OCI-LY7 (cell line): ENCODE measurements at regions of chr7 and their contacts with region 1.

Region 1: GRCh38 chr7:7968543-7969305 is at the start of gene GLCCI1:
- DNase-seq: peak; percentile 98
- H3K4me3 ChIP-seq: peak within 1 kb of the TSS; percentile 72
- H3K27ac ChIP-seq: peak within 1 kb of the TSS; percentile 92
- H3K4me1 ChIP-seq: peaks cover 50% of the 10 kb centered on the region
- CTCF ChIP-seq: no peak
- total RNA-seq, gene GLCCI1: 18.5 and 21.3 TPM in 2 replicates

Region 2: DNA sequence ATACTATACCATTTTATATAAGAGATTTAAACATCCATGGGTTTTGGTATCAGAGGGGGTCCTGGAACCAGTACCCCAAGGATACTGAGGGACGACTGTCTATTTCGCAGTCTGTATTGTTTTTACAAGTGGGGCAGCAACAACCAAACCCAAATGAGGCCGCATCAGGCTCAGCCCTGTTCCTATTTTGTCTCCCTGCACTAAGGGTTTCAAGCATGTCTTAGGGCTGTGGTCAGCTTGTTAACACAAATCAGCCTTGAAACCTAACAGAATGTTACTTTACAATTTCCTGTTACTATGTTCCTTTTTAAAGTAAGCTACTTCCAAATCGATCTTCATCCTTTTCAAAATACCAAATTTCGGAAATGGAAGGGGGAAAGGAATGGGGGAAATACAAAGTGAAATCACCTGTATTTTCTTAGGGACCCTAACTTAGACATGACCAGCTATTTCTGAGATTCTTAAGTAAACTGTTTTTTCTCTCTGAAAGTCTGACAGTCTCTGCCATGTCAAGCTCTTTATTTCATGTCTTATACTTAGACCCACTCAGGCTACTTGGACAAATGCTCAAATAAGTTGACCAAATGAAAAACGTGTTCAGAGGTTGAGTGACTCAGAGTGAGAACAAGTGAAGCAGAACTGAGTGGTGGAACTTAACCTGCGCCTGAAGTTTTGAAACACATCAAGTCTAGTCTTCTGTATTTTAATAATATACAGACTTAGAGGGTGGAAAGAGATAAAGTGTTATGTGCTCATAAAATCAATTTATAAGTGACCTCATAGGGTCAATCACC is 710.6 kb before region 1 on chr7:
- CTCF ChIA-PET with region 1: no interaction called
- POLR2A ChIA-PET with region 1: no interaction called
- intact Hi-C with region 1: loop called (anchors 5 kb)
- DNase-seq: peak; percentile 60
- H3K4me3 ChIP-seq: peak overlapping the region; percentile 65
- H3K27ac ChIP-seq: peak overlapping the region; percentile 86
- H3K4me1 ChIP-seq: peaks cover 44% of the 10 kb centered on the region
- CTCF ChIP-seq: no peak

Region 3: DNA sequence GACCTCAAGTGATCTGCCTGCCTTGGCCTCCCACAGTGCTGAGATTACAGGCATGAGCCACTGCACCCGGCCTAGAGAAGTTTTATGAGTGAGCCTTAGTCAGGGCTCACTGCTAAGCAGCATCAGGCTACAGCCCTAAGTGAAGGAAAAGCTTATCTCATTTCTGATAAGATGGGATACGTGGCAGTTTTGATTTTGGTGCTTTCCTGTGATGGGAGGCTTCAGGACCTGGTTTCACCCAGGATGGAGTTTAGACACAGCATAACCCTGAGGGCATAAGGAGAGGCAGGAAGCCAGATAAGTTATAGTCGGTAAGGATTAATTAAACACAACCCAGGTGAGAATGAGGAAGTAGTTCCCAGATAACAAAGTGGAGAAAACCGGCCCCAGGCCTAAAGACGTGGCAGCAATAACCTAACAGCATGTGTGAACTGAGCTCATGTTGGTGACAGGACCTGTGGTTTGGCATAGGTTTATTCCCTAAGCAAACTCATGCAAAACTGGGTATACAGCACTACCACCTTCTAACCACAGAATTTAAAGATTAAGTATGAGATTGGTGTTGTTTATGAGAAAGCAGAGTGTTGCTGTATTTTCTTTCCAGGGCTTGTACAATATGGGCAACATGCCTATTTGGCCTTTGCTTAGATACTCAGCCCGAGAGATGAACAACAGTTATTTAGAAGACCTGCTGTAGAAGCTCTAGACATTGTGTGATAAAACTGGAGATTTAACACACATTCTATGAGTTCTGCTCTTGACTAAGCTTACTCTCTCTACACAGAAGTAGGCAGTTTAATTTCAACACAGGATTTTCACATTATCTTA is 552.5 kb before region 1 on chr7:
- CTCF ChIA-PET with region 1: no interaction called
- POLR2A ChIA-PET with region 1: no interaction called
- intact Hi-C with region 1: no loop called
- DNase-seq: no peak
- H3K4me3 ChIP-seq: no peak overlapping the region
- H3K27ac ChIP-seq: no peak overlapping the region
- H3K4me1 ChIP-seq: no peaks in the 10 kb centered on the region
- CTCF ChIP-seq: no peak

Region 4: DNA sequence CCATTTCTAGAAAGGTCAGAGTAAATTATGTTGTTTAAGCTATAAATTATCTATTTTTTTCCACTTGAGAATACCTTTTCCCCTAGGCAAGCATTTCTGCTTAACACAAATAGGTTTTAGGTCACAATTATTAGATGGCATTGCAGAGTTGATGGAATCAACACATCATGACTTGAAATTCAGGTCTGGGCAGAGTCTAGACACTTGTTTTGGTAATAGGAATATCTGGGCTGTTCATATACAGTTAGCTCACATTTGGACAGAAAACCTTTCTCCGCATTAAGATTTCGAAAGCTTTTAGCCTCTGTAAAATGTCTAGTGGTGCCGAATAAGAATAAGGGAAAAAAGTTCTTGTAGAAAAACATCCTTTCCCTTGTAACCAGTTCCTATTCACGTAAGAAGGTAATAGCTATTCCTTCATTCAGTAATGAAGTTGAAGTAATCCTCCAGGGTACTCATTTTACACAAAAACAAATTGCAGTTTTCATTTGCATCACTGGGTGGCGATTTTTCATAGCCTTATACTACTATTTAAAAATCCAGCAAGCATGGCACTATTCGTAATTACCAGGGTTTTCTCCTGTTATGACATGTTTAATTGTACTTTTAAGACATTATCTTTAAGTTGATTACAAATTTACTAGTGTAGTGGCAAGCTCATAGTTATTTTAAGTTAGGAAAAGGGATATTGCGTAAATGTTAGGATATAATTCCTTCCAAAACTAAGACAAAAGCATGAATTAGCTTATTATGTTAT is 287.4 kb before region 1 on chr7:
- CTCF ChIA-PET with region 1: interaction called, 4 read pairs
- POLR2A ChIA-PET with region 1: interaction called, 5 read pairs
- intact Hi-C with region 1: loop called (anchors 1 kb)
- DNase-seq: peak; percentile 75
- H3K4me3 ChIP-seq: no peak overlapping the region
- H3K27ac ChIP-seq: peak overlapping the region; percentile 12
- H3K4me1 ChIP-seq: peaks cover 6% of the 10 kb centered on the region
- CTCF ChIP-seq: peak; percentile 91

Region 5: DNA sequence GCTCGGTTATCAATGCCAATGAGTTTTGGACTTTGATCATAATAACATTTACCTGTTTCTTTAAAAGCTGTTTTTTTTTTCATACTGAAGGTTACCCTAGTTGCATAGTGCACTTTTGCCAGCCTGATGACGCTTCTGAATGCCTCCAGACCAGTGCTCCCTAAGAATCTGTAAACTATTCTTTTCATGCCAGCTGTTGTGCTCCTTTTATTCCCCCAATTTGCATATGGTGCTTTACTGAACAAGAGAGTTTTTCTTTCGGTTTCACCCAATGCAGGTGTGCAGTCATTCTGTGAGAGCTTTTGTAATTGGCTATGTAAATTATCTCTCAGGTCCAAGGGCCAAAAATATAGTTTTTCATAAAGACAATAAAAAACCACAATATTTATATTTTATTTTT is 48.2 kb before region 1 on chr7:
- CTCF ChIA-PET with region 1: interaction called, 4 read pairs
- POLR2A ChIA-PET with region 1: interaction called, 69 read pairs
- intact Hi-C with region 1: loop called (anchors 1 kb)
- DNase-seq: peak; percentile 94
- H3K4me3 ChIP-seq: peak overlapping the region; percentile 48
- H3K27ac ChIP-seq: peak overlapping the region; percentile 87
- H3K4me1 ChIP-seq: peaks cover 74% of the 10 kb centered on the region
- CTCF ChIP-seq: no peak

Region 6: DNA sequence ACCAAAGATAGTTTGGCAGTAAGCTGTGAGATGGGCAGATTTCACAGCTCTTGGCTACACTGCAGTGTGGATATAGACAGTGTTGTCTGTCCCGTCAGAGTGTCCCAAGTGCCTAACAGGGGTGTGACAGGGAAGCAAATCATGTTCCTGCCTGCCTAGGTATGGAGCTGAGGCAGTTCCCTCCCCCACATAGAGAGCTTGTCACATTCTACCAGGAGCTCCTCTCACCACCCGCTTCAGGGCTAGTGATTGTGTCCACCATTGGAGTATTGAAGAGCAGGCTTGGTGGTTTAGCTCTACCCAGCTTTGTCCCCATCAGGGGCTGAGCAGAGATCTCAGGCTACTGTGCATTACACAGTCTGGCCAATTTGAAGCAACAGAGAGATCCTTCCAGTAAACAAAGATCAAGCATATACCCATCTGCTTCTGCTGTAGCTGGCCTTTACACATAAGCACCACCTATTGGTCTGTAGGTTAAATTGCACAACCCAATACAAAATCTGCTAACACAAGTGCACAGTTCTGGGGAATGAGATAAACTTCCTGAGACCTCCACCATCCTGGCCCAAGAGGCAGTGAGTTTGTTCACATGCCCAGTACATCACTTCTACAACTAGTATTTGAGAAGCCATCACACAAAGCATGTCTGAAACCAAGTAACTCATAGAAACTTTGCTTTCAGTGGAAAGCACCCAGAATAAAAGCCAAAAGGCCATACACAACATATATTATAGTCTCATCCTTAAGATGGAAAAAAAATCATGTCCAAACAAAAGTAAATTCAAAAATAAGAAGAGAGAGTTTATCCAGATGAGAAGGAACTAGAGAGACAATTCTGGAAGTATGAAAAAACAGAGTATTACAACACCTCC is 67.2 kb after region 1 on chr7:
- CTCF ChIA-PET with region 1: interaction called, 3 read pairs
- POLR2A ChIA-PET with region 1: no interaction called
- intact Hi-C with region 1: loop called (anchors 1 kb)
- DNase-seq: peak; percentile 62
- H3K4me3 ChIP-seq: no peak overlapping the region
- H3K27ac ChIP-seq: no peak overlapping the region
- H3K4me1 ChIP-seq: peaks cover 10% of the 10 kb centered on the region
- CTCF ChIP-seq: peak; percentile 83

Region 7: DNA sequence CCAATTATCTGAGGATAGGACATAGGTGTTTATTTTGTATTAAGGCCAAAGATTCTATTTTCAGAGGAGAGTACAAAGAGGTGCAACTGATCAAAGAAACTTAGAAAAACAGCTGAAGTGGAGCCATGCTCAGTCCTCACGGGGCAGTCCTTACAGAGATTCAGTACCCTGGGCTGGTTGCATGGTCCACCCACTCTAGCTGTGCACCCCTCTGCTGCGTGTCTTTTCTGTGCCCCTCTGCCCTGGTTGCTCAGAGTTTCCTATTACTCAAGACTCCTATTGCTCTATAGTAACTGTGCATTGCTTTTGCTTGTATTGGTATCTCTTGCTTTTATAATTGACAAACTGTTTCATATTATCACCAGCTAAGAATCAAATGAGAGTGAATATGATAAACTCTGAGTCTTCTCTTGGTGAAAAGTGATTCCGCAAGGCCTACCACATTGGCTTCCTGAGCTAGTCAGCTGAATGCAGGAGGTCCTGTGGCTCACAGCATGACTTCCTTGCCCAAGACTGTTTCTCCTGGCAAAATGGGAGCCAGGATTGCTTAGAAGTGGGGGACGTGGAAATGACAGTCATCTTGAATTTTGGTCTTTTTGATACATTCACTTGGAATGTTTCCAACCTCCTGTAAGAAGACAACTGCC is 136.8 kb after region 1 on chr7:
- CTCF ChIA-PET with region 1: no interaction called
- POLR2A ChIA-PET with region 1: no interaction called
- intact Hi-C with region 1: no loop called
- DNase-seq: no peak
- H3K4me3 ChIP-seq: no peak overlapping the region
- H3K27ac ChIP-seq: no peak overlapping the region
- H3K4me1 ChIP-seq: no peaks in the 10 kb centered on the region
- CTCF ChIP-seq: no peak